AG04449 (cell line): ENCODE measurements at regions of chr4 and their contacts with region 1.

Region 1: DNA sequence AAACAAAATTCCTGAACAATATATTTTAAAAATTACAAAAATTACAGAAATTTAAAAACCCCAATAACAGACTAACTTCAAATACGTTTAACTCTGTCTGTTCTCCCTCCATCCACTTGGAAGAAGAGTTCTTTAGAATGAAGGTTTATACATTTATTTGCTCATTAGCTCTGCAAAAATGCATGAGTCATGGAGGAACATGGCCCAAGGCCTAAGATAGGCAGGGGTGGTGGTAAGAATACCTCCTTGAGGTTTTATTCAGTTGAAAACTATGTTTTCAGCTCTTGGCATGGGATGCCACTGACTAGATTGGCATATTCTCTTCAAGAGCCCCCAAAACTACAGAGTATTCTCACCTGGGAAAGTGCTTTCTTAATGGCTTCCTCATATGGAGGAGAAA is 8.8 kb upstream of the LRRC66 start:
- DNase-seq: peak; percentile 41
- H3K4me3 ChIP-seq: no peak overlapping the region
- CTCF ChIP-seq: no peak

Region 2: DNA sequence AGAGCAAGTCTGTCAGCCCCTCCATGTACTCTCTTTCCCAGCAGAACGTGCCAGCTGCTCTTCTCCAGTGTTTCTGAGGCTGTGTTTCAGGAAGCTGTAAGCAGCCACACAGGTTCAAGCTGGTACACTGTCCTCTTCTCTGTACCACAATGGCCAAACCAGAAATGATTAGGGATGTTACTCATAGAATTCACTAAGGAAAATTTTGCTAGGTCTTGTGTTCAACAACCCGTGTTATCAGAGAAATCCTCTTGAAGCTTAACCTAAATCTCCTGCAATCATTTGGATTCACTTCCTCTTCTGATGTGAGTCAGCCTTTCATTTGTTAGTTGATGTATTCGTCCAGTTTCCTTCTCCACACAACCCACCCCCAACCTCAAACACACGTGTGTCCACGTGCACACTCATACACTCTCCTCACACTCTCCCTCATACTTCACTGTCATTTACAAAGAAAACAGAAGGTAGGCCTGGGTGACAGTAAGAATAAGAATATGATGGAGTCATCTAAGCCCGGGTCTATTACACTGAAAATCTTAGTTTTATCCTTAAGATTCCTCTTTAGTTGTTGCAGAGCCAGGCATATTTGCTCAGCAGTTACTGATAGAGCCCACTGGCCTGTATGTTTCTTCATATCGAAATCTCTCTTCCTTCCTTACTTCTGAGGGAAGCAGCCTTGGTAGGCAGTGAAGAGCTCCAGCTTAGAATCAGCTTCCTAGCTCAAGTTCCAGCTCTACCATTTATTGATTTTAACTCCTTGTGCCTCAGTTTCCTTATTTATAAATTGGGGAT is 122.6 kb before region 1 on chr4:
- CTCF ChIA-PET with region 1: interaction called, 15 read pairs
- POLR2A ChIA-PET with region 1: no interaction called
- DNase-seq: no peak
- H3K4me3 ChIP-seq: no peak overlapping the region
- CTCF ChIP-seq: no peak

Region 3: GRCh38 chr4:52015366-52015765 is 13.6 kb before region 1 on chr4:
- CTCF ChIA-PET with region 1: interaction called, 10 read pairs
- POLR2A ChIA-PET with region 1: no interaction called
- DNase-seq: no peak
- H3K4me3 ChIP-seq: no peak overlapping the region
- CTCF ChIP-seq: no peak

Region 4: DNA sequence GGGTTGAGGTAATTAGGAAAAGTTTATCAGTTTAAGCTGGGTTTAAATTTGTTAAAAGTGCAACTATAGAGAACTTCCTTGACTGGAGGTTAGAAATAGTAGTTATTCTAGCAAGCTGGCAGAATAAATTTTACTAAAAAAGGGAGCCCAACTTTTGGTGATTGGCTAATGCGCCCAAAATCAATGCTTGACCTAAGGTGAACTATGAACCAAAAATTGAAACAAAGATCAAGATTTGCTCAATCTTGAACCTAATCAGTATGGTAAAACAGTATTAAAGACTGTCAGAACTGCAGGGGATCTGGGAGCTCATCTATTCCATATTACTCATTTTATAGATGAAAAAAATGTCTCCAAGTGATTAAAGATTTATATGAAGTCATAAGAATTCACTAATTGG is 16.1 kb after region 1 on chr4:
- CTCF ChIA-PET with region 1: no interaction called
- POLR2A ChIA-PET with region 1: no interaction called
- DNase-seq: no peak
- H3K4me3 ChIP-seq: no peak overlapping the region
- CTCF ChIP-seq: no peak